Activated T-helper 2 cell treated with anti-CD3 and anti-CD28 coated beads, Interferon-gamma antibody, Interleukin-2, Interleukin-4, amounts not matched to agents 10 μg/mL and 5 μg/mL and 100 μg/mL, durations not matched to agents 14 hours and 24 hours and 36 hours (primary cell): ENCODE measurements at regions of chr2 and their contacts with region 1.

Region 1: DNA sequence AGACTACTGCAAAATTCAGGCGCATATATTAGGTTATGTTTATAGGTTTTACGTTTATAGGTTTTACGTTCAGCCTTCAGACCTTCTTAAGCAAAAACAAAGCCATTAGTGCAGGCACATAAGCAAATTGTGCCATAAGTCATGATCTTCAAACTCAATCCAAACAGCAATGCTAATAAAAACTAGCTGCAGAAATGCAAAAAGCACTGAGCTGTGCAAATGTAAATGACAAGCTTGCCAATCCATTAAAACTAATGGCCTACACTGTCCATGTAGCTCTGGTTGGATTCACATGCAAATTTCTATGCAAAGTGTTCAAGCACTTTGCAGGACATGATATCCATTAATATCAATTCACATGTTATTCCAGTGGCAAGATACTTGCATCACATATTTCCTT is 50.9 kb downstream of the LRPPRC start:
- DNase-seq: no peak
- H3K4me3 Mint-ChIP-seq: no peak overlapping the region
- H3K27ac Mint-ChIP-seq: no peak overlapping the region
- H3K4me1 Mint-ChIP-seq: peaks cover 5% of the 10 kb centered on the region
- H3K27me3 Mint-ChIP-seq: no peaks in the 10 kb centered on the region

Region 2: DNA sequence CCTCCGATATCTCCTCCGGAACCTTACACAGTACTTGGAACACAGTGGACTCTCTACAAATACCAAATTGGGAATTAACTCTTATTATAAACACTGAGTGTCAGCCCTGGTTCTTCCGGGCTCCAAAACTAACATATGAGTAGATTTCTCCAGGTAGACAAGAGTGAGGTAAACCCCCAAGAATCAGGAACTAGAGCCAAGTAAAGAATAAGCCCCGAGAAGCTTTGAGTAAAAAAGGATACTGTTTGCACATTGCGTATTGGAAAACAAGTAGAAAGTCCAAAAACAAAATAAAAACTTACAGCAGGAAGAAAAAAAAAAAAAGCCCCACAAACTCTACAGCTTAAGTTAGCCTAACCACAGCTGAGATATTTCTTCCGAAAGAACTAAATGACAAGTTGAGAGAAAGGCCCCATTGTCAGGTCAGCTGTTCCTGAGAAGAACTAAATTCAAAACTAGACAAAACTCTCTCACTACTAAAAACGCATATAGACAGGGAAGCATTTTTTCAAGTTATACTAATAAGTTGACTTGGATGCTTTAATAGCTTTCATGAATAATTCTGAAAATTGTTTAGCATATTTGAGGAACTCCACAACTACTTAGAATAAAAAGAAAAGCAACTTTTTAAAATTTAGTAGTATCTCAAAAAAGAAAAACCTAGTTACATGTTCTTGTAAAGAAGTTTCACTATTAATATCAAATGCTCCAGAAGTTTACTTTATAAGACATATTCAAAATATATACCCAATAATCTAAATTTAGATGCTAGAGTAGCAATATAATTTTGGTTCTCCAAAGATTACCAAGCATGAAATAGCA is 1148.3 kb before region 1 on chr2:
- intact Hi-C with region 1: no loop called
- DNase-seq: no peak
- H3K4me3 Mint-ChIP-seq: no peak overlapping the region
- H3K27ac Mint-ChIP-seq: peak overlapping the region; percentile 80
- H3K4me1 Mint-ChIP-seq: peaks cover 37% of the 10 kb centered on the region
- H3K27me3 Mint-ChIP-seq: peaks cover 20% of the 10 kb centered on the region

Region 3: GRCh38 chr2:43818761-43819160 is 126.2 kb before region 1 on chr2:
- intact Hi-C with region 1: no loop called
- DNase-seq: no peak
- H3K4me3 Mint-ChIP-seq: no peak overlapping the region
- H3K27ac Mint-ChIP-seq: peak overlapping the region; percentile 24
- H3K4me1 Mint-ChIP-seq: peaks cover 10% of the 10 kb centered on the region
- H3K27me3 Mint-ChIP-seq: no peaks in the 10 kb centered on the region

Region 4: GRCh38 chr2:43905371-43905803 is 39.5 kb before region 1 on chr2:
- intact Hi-C with region 1: loop called (anchors 5 kb)
- DNase-seq: no peak
- H3K4me3 Mint-ChIP-seq: no peak overlapping the region
- H3K27ac Mint-ChIP-seq: no peak overlapping the region
- H3K4me1 Mint-ChIP-seq: peaks cover 25% of the 10 kb centered on the region
- H3K27me3 Mint-ChIP-seq: no peaks in the 10 kb centered on the region

Region 5: DNA sequence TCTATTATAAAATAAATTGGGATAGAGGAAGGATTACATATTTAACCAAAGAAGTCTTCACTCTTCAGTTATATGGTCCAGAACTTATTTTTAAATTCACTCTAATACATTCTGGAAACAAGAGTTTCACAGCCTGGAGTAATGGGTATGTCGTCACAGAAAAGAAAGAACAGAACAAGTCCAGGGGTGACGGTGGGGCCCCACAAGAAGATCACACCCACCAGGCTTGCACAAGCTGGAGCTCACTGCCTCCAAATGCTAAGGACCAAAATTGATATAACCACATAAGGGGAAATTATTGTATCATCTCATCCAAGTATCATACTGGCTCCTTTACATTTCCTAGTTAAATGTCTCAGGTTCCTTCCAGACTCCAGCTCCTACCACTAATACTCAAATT is 39.6 kb after region 1 on chr2:
- intact Hi-C with region 1: loop called (anchors 5 kb)
- DNase-seq: no peak
- H3K4me3 Mint-ChIP-seq: no peak overlapping the region
- H3K27ac Mint-ChIP-seq: no peak overlapping the region
- H3K4me1 Mint-ChIP-seq: peaks cover 28% of the 10 kb centered on the region
- H3K27me3 Mint-ChIP-seq: no peaks in the 10 kb centered on the region